Naive thymus-derived CD4-positive, alpha-beta T cell (primary cell): ENCODE measurements at regions of chr6 and their contacts with region 1.

Region 1: DNA sequence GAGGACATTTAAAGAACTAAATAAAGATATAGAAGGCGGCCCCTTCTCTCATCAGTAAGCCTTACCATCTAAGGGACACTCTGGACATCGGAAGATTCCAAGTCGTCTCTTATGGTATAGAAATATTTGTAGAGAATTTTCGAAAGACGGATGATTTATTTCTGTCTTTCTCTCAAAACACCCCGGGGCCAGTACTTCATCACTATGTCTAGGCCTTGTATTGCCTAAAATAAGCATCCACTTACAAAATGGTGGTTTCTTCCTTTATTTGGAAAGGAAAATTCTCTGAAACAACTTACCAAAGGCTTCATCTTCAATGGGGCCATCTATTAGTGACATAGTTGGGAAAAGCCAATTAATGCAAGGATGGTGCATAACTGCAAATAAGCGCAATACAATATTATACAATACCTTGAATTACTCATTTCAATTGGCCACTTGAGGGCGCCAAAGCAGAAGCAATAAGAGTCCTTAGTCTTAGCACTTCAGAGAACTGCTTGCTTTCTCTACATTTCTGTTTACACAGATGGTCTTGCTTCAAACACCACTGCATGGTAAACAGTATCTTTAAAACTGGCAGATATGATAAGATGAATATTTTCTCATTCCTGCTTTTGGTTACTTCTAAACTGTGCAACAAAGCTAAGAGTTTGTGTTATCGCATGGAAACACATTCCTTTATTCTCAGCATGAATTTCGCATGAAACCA is 113.2 kb downstream of the VIP start:
- DNase-seq: peak; percentile 14 to 62 (median 49)
- ATAC-seq: peak; percentile 79
- H3K4me3 ChIP-seq: no peak overlapping the region
- H3K4me3 Mint-ChIP-seq: no peak overlapping the region
- H3K27ac ChIP-seq: no peak overlapping the region
- H3K27ac Mint-ChIP-seq: no peak overlapping the region
- H3K4me1 ChIP-seq: no peaks in the 10 kb centered on the region
- H3K4me1 Mint-ChIP-seq: no peaks in the 10 kb centered on the region
- H3K27me3 ChIP-seq: no peaks in the 10 kb centered on the region
- H3K27me3 Mint-ChIP-seq: peaks cover 7 to 26% (median 23%) of the 10 kb centered on the region in 5 donors

Region 2: DNA sequence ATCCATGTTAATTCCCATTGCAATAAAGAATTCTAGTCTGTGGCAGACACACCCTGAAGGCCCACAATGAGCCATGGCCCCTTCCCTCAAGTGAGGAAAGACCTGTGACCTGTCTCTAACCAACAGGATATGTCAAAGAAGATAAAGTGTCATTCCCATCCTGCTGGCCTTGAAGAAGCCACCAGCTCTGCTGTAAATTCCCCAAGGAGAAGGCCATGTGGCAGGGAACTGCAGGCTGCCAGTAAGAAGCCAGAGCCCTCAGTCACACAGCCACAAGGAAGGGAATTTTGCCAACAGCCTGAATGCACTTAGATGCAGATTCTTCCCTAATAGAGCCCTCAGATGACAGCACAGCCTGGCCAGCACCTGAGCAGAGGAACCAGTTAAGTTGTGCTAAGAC is 88.3 kb before region 1 on chr6:
- CTCF ChIA-PET with region 1: no interaction called
- POLR2A ChIA-PET with region 1: no interaction called
- intact Hi-C with region 1: no loop called
- DNase-seq: no peak
- ATAC-seq: no peak
- H3K4me3 ChIP-seq: no peak overlapping the region
- H3K4me3 Mint-ChIP-seq: no peak overlapping the region
- H3K27ac ChIP-seq: no peak overlapping the region
- H3K27ac Mint-ChIP-seq: no peak overlapping the region
- H3K4me1 ChIP-seq: no peaks in the 10 kb centered on the region
- H3K4me1 Mint-ChIP-seq: no peaks in the 10 kb centered on the region
- H3K27me3 ChIP-seq: no peaks in the 10 kb centered on the region
- H3K27me3 Mint-ChIP-seq: peaks cover 0 to 4% (median 0%) of the 10 kb centered on the region in 5 donors

Region 3: GRCh38 chr6:152897799-152898399 is 34.1 kb after region 1 on chr6:
- CTCF ChIA-PET with region 1: no interaction called
- POLR2A ChIA-PET with region 1: no interaction called
- intact Hi-C with region 1: loop called in 1 of 2 experiments (anchors 5 kb)
- DNase-seq: peak in 8 of 9 donors; percentile 23 to 67 (median 42)
- ATAC-seq: peak; percentile 83
- H3K4me3 ChIP-seq: no peak overlapping the region
- H3K4me3 Mint-ChIP-seq: no peak overlapping the region
- H3K27ac ChIP-seq: no peak overlapping the region
- H3K27ac Mint-ChIP-seq: no peak overlapping the region
- H3K4me1 ChIP-seq: no peaks in the 10 kb centered on the region
- H3K4me1 Mint-ChIP-seq: peaks cover 0 to 5% (median 0%) of the 10 kb centered on the region in 7 donors
- H3K27me3 ChIP-seq: no peaks in the 10 kb centered on the region
- H3K27me3 Mint-ChIP-seq: peaks cover 26 to 45% (median 32%) of the 10 kb centered on the region in 5 donors

Region 4: DNA sequence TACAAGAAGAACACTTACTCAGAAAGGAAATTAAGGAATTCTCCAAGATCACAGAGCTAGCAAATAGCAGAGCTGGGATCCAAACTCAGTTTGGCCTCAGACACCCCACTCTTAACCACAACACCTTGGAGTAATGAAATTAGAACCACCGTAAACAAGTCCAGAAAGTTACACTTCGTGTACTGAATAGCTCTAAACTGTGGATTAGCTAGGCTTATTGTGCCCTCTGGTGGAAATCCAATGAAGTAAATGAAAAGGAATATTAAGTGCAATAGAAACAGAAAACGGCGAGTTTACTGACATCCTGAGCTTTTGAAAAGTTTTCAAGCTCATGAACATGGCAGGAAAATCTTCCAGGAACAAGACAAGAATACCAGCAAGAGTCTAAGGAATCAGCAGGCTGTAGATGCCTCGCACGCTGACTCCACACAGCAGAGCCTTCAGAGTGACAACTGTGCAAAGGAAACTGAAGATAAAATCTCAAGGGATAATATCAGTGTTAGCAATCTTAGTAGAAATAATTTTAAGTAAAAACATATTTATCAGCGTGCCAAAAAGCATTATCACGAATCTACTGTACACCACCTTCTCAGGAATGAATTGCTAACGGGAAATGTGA is 84.5 kb after region 1 on chr6:
- CTCF ChIA-PET with region 1: interaction called, 5 read pairs
- POLR2A ChIA-PET with region 1: no interaction called
- intact Hi-C with region 1: loop called (anchors 1 kb)
- DNase-seq: peak in 5 of 9 donors; percentile 9 to 35 (median 26)
- ATAC-seq: peak; percentile 72
- H3K4me3 ChIP-seq: no peak overlapping the region
- H3K4me3 Mint-ChIP-seq: peak overlapping the region in 7 of 10 donors; percentile 3 to 56 (median 41)
- H3K27ac ChIP-seq: no peak overlapping the region
- H3K27ac Mint-ChIP-seq: no peak overlapping the region
- H3K4me1 ChIP-seq: no peaks in the 10 kb centered on the region
- H3K4me1 Mint-ChIP-seq: peaks cover 0 to 11% (median 9%) of the 10 kb centered on the region in 7 donors
- H3K27me3 ChIP-seq: peaks cover 0 to 7% of the 10 kb centered on the region in 2 donors
- H3K27me3 Mint-ChIP-seq: peaks cover 17 to 44% (median 25%) of the 10 kb centered on the region in 5 donors

Region 5: DNA sequence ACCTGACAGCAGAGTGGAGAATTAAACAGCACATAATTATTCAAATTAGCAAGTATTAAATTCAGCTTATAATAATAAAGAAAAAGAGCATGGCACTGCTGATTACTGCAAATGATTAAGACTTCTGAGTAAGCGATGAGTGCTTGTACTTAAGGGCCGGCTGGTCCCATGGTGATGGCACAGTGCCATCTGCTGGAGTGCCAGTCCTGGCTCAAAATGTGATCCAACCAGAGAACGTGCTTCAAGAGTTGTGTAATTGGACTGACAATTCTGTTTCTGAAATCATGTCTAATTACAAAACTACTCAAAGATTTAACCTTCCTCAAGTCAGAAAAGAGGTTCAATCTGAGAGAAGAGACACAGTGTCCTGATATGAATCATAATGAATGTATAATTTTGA is 448.9 kb after region 1 on chr6:
- CTCF ChIA-PET with region 1: no interaction called
- POLR2A ChIA-PET with region 1: no interaction called
- intact Hi-C with region 1: loop called (anchors 2 to 5 kb)
- DNase-seq: peak in 3 of 9 donors; percentile 2 to 36 (median 13)
- ATAC-seq: peak; percentile 45
- H3K4me3 ChIP-seq: no peak overlapping the region
- H3K4me3 Mint-ChIP-seq: no peak overlapping the region
- H3K27ac ChIP-seq: no peak overlapping the region
- H3K27ac Mint-ChIP-seq: no peak overlapping the region
- H3K4me1 ChIP-seq: no peaks in the 10 kb centered on the region
- H3K4me1 Mint-ChIP-seq: peaks cover 0 to 7% (median 0%) of the 10 kb centered on the region in 7 donors
- H3K27me3 ChIP-seq: no peaks in the 10 kb centered on the region
- H3K27me3 Mint-ChIP-seq: peaks cover 0 to 8% (median 4%) of the 10 kb centered on the region in 5 donors

Region 6: DNA sequence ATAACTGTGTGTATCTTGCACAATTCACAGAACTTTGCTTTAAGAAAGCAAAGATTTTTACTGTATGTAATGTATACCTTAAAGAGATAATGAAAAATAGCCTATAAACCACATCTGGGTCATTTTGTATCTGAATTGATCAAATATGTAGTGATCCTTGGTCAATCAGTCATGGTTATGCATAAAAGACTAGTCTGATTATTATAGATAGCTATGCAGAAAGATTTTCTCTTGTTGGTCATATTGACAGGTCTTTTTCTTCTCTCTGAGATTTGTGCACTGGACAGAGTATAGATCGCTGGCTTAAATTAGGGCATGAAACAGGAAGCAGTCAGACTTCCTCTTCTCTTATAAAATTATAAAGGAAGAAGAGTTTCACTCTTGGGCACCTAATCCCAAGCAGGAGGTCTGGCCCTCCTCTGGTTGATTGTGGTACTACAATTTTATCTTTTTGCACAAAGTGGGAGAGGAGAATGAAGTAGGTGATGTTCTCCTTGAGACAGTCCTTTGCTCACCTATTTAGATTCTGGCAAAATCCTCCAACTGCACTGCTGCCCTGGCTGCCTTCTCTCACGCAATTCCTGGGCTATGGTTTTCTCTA is 648.2 kb after region 1 on chr6:
- CTCF ChIA-PET with region 1: no interaction called
- POLR2A ChIA-PET with region 1: no interaction called
- intact Hi-C with region 1: loop called in 1 of 2 experiments (anchors 5 kb)
- DNase-seq: peak in 5 of 9 donors; percentile 1 to 27 (median 16)
- ATAC-seq: peak; percentile 49
- H3K4me3 ChIP-seq: no peak overlapping the region
- H3K4me3 Mint-ChIP-seq: peak overlapping the region in 1 of 10 donors; percentile 24
- H3K27ac ChIP-seq: no peak overlapping the region
- H3K27ac Mint-ChIP-seq: peak overlapping the region in 1 of 9 donors; percentile 49
- H3K4me1 ChIP-seq: no peaks in the 10 kb centered on the region
- H3K4me1 Mint-ChIP-seq: peaks cover 0 to 7% (median 2%) of the 10 kb centered on the region in 7 donors
- H3K27me3 ChIP-seq: no peaks in the 10 kb centered on the region
- H3K27me3 Mint-ChIP-seq: no peaks in the 10 kb centered on the region